ENCODE measurements at regions of chr1 and their contacts with region 1.

Region 1: DNA sequence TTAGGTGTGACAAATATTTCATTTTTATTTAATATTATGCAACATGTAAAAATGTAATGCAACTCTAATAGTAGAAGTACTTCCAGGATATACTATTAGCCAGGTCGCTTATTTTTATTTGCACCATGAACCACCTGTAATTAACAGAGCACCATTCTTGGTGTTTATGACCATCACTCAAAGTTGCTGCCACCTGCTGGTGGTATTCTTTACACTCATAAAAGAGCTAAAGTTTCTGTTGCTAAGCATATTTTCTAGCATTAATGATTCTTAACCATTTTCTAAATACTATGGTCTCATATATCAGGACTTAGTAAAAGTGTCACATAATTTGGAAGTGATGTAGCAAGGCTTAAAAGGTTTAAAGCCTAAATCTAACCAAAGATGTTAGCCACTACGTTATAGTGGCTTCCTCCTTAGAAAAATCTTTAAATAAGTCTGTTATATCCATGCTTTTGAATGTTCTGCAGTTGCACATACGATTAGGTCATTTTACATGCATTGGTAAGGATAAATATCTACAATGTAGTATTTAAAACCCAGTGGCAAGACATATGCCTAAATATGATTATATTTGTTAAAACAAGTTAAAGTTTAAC is 244.5 kb downstream of the NEGR1 start:
- DNase-seq: peak; percentile 61
- H3K4me3 ChIP-seq: no peak overlapping the region
- H3K27ac ChIP-seq: no peak overlapping the region
- H3K4me1 ChIP-seq: no peaks in the 10 kb centered on the region
- H3K27me3 ChIP-seq: no peaks in the 10 kb centered on the region
- CTCF ChIP-seq: peak; percentile 82

Region 2: GRCh38 chr1:71094913-71095312 is 942.9 kb before region 1 on chr1:
- CTCF ChIA-PET with region 1: no interaction called
- POLR2A ChIA-PET with region 1: no interaction called
- intact Hi-C with region 1: loop called (anchors 5 kb)
- DNase-seq: no peak
- H3K4me3 ChIP-seq: no peak overlapping the region
- H3K27ac ChIP-seq: no peak overlapping the region
- H3K4me1 ChIP-seq: no peaks in the 10 kb centered on the region
- H3K27me3 ChIP-seq: no peaks in the 10 kb centered on the region
- CTCF ChIP-seq: no peak

Region 3: DNA sequence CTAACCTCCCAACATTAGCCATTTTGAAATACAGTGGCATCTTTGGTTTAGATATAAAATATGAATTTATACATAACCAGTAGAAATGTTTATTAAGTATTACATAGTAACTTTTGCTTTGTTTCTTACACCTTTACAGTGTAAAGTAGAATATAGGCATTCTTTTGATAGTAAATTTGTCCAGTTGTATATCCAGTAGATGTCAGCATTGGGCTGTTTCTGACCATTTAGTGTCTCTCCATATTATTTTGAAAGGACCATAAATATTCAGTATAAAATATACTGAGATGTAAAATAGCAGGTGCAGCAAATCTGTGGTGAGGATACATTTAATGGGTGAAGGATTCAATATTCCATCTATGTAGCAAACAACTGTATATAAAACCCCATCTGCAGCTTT is 841.2 kb before region 1 on chr1:
- CTCF ChIA-PET with region 1: interaction called, 8 read pairs
- POLR2A ChIA-PET with region 1: no interaction called
- intact Hi-C with region 1: loop called (anchors 2 kb)
- DNase-seq: peak; percentile 56
- H3K4me3 ChIP-seq: no peak overlapping the region
- H3K27ac ChIP-seq: no peak overlapping the region
- H3K4me1 ChIP-seq: no peaks in the 10 kb centered on the region
- H3K27me3 ChIP-seq: no peaks in the 10 kb centered on the region
- CTCF ChIP-seq: peak; percentile 61

Region 4: DNA sequence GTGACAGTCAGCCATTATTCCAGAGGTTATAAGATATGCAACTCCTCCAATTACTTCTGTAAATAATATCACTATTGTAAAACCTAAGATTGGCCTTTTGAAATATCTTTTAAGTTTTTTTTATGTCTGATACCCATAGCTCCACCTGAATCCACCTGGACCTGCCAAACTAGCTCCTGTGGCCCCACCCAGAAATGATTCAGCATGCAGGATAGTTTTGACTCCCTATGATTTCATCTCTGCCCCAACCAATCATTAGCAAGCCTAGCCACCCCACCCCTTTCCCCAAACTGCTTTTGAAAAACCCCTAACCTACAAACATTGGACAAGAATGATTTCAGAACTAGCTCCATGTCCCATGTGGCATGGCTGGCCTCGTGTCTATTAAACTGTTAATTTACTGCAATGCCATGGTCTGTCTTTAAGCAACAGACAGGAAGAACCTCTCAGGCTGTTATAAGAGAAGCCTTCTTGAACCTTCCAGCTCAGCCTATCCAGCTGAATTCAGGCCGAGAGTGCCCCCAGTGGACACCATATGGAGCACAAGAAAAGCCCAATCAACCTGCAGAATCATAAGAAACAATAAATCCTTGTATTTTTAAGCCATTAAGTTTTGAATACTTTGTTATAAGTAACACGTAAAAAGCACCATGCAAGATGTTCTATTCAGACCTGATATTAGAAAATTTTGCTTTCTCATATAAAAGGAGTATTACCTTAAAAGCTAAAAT is 694.0 kb before region 1 on chr1:
- CTCF ChIA-PET with region 1: no interaction called
- POLR2A ChIA-PET with region 1: interaction called, 18 read pairs
- intact Hi-C with region 1: no loop called
- DNase-seq: no peak
- H3K4me3 ChIP-seq: no peak overlapping the region
- H3K27ac ChIP-seq: no peak overlapping the region
- H3K4me1 ChIP-seq: no peaks in the 10 kb centered on the region
- H3K27me3 ChIP-seq: no peaks in the 10 kb centered on the region
- CTCF ChIP-seq: peak; percentile 53

Region 5: GRCh38 chr1:71448326-71449010 is 589.4 kb before region 1 on chr1:
- CTCF ChIA-PET with region 1: interaction called, 12 read pairs
- POLR2A ChIA-PET with region 1: no interaction called
- intact Hi-C with region 1: no loop called
- DNase-seq: peak; percentile 4
- H3K4me3 ChIP-seq: no peak overlapping the region
- H3K27ac ChIP-seq: no peak overlapping the region
- H3K4me1 ChIP-seq: no peaks in the 10 kb centered on the region
- H3K27me3 ChIP-seq: no peaks in the 10 kb centered on the region
- CTCF ChIP-seq: no peak

Region 6: GRCh38 chr1:71593523-71593922 is 444.3 kb before region 1 on chr1:
- CTCF ChIA-PET with region 1: interaction called, 5 read pairs
- POLR2A ChIA-PET with region 1: no interaction called
- intact Hi-C with region 1: loop called (anchors 5 kb)
- DNase-seq: peak; percentile 58
- H3K4me3 ChIP-seq: no peak overlapping the region
- H3K27ac ChIP-seq: no peak overlapping the region
- H3K4me1 ChIP-seq: no peaks in the 10 kb centered on the region
- H3K27me3 ChIP-seq: no peaks in the 10 kb centered on the region
- CTCF ChIP-seq: peak; percentile 64